ENCODE measurements at regions of chr2 and their contacts with region 1.

Region 1: GRCh38 chr2:162221064-162221463 is 22.2 kb downstream of the FAP start:
- DNase-seq: peak in 3 of 5 donors; percentile 26 to 65 (median 35)
- H3K4me3 ChIP-seq: no peak overlapping the region
- H3K27ac ChIP-seq: no peak overlapping the region
- H3K4me1 ChIP-seq: no peaks in the 10 kb centered on the region
- H3K27me3 ChIP-seq: no peaks in the 10 kb centered on the region
- CTCF ChIP-seq: peak; percentile 76

Region 2: GRCh38 chr2:162058973-162059668 is 161.9 kb before region 1 on chr2:
- intact Hi-C with region 1: no loop called
- DNase-seq: peak in 2 of 5 donors; percentile 48 to 58
- H3K4me3 ChIP-seq: no peak overlapping the region
- H3K27ac ChIP-seq: no peak overlapping the region
- H3K4me1 ChIP-seq: no peaks in the 10 kb centered on the region
- H3K27me3 ChIP-seq: no peaks in the 10 kb centered on the region
- CTCF ChIP-seq: no peak

Region 3: DNA sequence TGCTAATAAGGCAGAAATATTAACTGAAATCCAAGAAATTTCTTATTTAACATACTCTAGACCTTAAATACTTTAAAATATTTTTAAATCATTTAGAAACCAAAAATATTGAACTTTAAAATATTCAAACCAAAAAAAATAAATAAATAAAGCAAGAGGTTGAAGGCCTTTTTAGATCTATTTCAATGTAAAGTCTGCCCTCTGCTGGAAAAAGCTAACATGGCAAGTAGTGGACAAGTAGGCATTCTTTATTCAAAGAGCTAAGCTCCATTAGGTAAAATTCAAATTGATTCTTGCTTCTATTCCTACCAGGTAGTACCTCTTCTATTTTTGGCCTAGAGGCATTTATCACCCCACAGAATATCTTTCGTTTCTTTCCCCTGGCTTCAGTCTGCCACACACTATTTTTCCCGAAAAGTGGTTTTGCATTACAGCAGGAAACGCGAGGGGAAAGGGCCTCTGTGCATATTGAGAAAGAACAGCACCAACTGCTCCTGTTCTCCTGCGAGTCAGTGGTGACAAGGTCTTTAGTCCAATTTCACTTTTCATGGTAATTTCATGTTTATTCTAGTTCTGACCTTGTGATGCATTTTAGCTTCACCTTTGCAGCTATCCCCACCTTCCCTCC is 77.0 kb after region 1 on chr2:
- intact Hi-C with region 1: loop called (anchors 5 kb)
- DNase-seq: peak in 4 of 5 donors; percentile 34 to 89 (median 66)
- H3K4me3 ChIP-seq: no peak overlapping the region
- H3K27ac ChIP-seq: no peak overlapping the region
- H3K4me1 ChIP-seq: no peaks in the 10 kb centered on the region
- H3K27me3 ChIP-seq: no peaks in the 10 kb centered on the region
- CTCF ChIP-seq: peak; percentile 82